GM12878 (cell line): ENCODE measurements at regions of chr4 and their contacts with region 1.

Region 1: DNA sequence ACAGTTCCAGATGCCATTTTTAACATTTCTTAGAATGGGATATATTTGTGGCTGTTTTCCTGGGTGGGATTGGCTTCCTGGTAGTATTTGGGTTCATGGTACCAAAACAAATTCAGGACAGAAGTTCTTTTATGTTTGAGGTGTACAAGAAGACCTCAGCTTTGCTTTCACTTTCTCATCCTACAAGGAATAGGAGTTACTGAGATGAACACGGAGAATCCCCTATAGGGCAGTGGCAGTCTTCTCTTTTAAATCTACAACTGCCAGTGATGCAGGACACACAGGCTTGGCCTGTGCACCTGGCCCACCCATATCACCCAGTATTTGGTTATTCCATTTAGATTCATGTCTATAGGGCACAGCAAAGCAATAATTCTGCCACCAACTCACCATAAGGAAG is 35.2 kb downstream of the SLC10A7 start:
- DNase-seq: peak; percentile 28
- ATAC-seq: peak; percentile 92
- H3K4me3 ChIP-seq: no peak overlapping the region
- H3K27ac ChIP-seq: peak overlapping the region; percentile 65
- H3K4me1 ChIP-seq: peaks cover 14% of the 10 kb centered on the region
- H3K27me3 ChIP-seq: no peaks in the 10 kb centered on the region
- CTCF ChIP-seq: no peak
- EP300 ChIP-seq: no peak
- POLR2A ChIP-seq: no peak
- RAD21 ChIP-seq: no peak

Region 2: GRCh38 chr4:146333187-146333894 is 153.2 kb before region 1 on chr4:
- CTCF ChIA-PET with region 1: no interaction called
- POLR2A ChIA-PET with region 1: no interaction called
- RAD21 ChIA-PET with region 1: no interaction called
- SMC1A ChIA-PET with region 1: no interaction called
- in situ Hi-C with region 1: no loop called
- intact Hi-C with region 1: no loop called
- DNase-seq: peak; percentile 59
- ATAC-seq: peak; percentile 88
- H3K4me3 ChIP-seq: peak overlapping the region; percentile 54
- H3K27ac ChIP-seq: peak overlapping the region; percentile 38
- H3K4me1 ChIP-seq: peaks cover 13% of the 10 kb centered on the region; the same call in 1 of the 2 replicates
- H3K27me3 ChIP-seq: no peaks in the 10 kb centered on the region
- CTCF ChIP-seq: no peak
- EP300 ChIP-seq: no peak
- POLR2A ChIP-seq: no peak
- RAD21 ChIP-seq: no peak

Region 3: GRCh38 chr4:146407669-146408084 is 78.9 kb before region 1 on chr4:
- CTCF ChIA-PET with region 1: no interaction called
- POLR2A ChIA-PET with region 1: no interaction called
- RAD21 ChIA-PET with region 1: no interaction called
- SMC1A ChIA-PET with region 1: no interaction called
- in situ Hi-C with region 1: no loop called
- intact Hi-C with region 1: no loop called
- DNase-seq: no peak
- ATAC-seq: no peak
- H3K4me3 ChIP-seq: no peak overlapping the region
- H3K27ac ChIP-seq: no peak overlapping the region
- H3K4me1 ChIP-seq: no peaks in the 10 kb centered on the region
- H3K27me3 ChIP-seq: no peaks in the 10 kb centered on the region
- CTCF ChIP-seq: no peak
- EP300 ChIP-seq: no peak
- POLR2A ChIP-seq: no peak
- RAD21 ChIP-seq: no peak

Region 4: DNA sequence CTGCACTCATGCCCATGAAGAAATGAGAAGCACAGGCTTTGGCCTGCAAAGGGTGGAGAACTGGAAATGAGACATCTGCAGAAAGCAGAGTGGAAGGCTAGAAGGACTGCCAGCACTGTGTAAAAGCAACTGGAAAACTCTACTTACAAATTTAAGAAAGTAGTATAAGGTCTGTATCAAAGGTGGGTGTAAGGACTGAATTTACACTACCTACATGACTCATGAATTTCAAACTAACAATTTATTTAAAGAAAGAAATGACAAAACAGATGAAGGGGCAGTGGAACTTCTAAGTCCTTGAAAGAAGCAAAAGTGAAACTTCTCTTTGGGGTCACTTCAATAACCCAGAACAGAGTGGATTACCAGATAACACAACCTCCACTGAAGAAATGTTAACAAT is 36.0 kb before region 1 on chr4:
- CTCF ChIA-PET with region 1: no interaction called
- POLR2A ChIA-PET with region 1: interaction called, 3 read pairs
- RAD21 ChIA-PET with region 1: no interaction called
- SMC1A ChIA-PET with region 1: interaction called, 3 read pairs
- in situ Hi-C with region 1: no loop called
- intact Hi-C with region 1: loop called (anchors 5 kb)
- DNase-seq: no peak
- ATAC-seq: peak; percentile 92
- H3K4me3 ChIP-seq: peak overlapping the region; percentile 57
- H3K27ac ChIP-seq: peak overlapping the region; percentile 28
- H3K4me1 ChIP-seq: peaks cover 14% of the 10 kb centered on the region; the same call in 1 of the 2 replicates
- H3K27me3 ChIP-seq: no peaks in the 10 kb centered on the region
- CTCF ChIP-seq: no peak
- EP300 ChIP-seq: no peak
- POLR2A ChIP-seq: no peak
- RAD21 ChIP-seq: no peak

Region 5: GRCh38 chr4:146472404-146472803 is 14.2 kb before region 1 on chr4:
- CTCF ChIA-PET with region 1: interaction called, 6 read pairs
- POLR2A ChIA-PET with region 1: interaction called, 3 read pairs
- RAD21 ChIA-PET with region 1: interaction called, 10 read pairs
- SMC1A ChIA-PET with region 1: interaction called, 14 read pairs
- in situ Hi-C with region 1: no loop called
- intact Hi-C with region 1: no loop called
- DNase-seq: no peak
- ATAC-seq: no peak
- H3K4me3 ChIP-seq: no peak overlapping the region
- H3K27ac ChIP-seq: no peak overlapping the region
- H3K4me1 ChIP-seq: no peaks in the 10 kb centered on the region
- H3K27me3 ChIP-seq: no peaks in the 10 kb centered on the region
- CTCF ChIP-seq: no peak
- EP300 ChIP-seq: no peak
- POLR2A ChIP-seq: no peak
- RAD21 ChIP-seq: no peak

Region 6: GRCh38 chr4:146814750-146815149 is 328.2 kb after region 1 on chr4:
- CTCF ChIA-PET with region 1: no interaction called
- POLR2A ChIA-PET with region 1: no interaction called
- RAD21 ChIA-PET with region 1: no interaction called
- SMC1A ChIA-PET with region 1: no interaction called
- in situ Hi-C with region 1: no loop called
- intact Hi-C with region 1: no loop called
- DNase-seq: no peak
- ATAC-seq: no peak
- H3K4me3 ChIP-seq: no peak overlapping the region
- H3K27ac ChIP-seq: no peak overlapping the region
- H3K4me1 ChIP-seq: no peaks in the 10 kb centered on the region
- H3K27me3 ChIP-seq: no peaks in the 10 kb centered on the region
- CTCF ChIP-seq: no peak
- EP300 ChIP-seq: no peak
- POLR2A ChIP-seq: no peak
- RAD21 ChIP-seq: no peak

Region 7: GRCh38 chr4:147037069-147037468 is 550.5 kb after region 1 on chr4:
- CTCF ChIA-PET with region 1: no interaction called
- POLR2A ChIA-PET with region 1: no interaction called
- RAD21 ChIA-PET with region 1: no interaction called
- SMC1A ChIA-PET with region 1: no interaction called
- in situ Hi-C with region 1: no loop called
- intact Hi-C with region 1: no loop called
- DNase-seq: no peak
- ATAC-seq: no peak
- H3K4me3 ChIP-seq: no peak overlapping the region
- H3K27ac ChIP-seq: no peak overlapping the region
- H3K4me1 ChIP-seq: no peaks in the 10 kb centered on the region
- H3K27me3 ChIP-seq: no peaks in the 10 kb centered on the region; a peak in 2 of 4 replicates
- CTCF ChIP-seq: no peak
- EP300 ChIP-seq: no peak
- POLR2A ChIP-seq: no peak
- RAD21 ChIP-seq: no peak